GM23248 (cell line): ENCODE measurements at regions of chr20 and their contacts with region 1.

Region 1: DNA sequence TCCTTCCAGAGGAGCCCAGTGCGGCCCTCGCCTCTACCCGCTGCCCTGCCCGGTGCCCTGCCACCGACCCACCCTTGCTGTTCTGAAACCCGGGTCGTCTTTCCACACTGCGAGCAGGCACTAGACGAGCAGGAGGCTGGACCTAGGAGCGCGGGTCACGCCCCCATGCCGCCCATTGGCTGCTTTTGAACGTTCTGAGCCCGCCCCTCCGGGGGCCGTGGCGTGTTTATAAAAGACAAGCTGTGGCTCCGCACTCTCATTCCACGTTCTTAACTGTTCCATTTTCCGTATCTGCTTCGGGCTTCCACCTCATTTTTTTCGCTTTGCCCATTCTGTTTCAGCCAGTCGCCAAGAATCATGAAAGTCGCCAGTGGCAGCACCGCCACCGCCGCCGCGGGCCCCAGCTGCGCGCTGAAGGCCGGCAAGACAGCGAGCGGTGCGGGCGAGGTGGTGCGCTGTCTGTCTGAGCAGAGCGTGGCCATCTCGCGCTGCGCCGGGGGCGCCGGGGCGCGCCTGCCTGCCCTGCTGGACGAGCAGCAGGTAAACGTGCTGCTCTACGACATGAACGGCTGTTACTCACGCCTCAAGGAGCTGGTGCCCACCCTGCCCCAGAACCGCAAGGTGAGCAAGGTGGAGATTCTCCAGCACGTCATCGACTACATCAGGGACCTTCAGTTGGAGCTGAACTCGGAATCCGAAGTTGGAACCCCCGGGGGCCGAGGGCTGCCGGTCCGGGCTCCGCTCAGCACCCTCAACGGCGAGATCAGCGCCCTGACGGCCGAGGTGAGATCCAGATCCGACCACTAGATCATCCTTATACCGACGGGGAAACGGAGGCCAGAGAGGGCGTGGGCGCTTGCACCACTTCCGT is at the start of gene ID1:
- DNase-seq: peak; percentile 98
- H3K4me3 ChIP-seq: peak within 1 kb of the TSS; percentile 98
- H3K27ac ChIP-seq: peak within 1 kb of the TSS; percentile 100
- H3K4me1 ChIP-seq: peaks cover 35% of the 10 kb centered on the region
- H3K27me3 ChIP-seq: no peaks in the 10 kb centered on the region
- total RNA-seq, gene ID1: 583 and 780 TPM in 2 replicates

Region 2: DNA sequence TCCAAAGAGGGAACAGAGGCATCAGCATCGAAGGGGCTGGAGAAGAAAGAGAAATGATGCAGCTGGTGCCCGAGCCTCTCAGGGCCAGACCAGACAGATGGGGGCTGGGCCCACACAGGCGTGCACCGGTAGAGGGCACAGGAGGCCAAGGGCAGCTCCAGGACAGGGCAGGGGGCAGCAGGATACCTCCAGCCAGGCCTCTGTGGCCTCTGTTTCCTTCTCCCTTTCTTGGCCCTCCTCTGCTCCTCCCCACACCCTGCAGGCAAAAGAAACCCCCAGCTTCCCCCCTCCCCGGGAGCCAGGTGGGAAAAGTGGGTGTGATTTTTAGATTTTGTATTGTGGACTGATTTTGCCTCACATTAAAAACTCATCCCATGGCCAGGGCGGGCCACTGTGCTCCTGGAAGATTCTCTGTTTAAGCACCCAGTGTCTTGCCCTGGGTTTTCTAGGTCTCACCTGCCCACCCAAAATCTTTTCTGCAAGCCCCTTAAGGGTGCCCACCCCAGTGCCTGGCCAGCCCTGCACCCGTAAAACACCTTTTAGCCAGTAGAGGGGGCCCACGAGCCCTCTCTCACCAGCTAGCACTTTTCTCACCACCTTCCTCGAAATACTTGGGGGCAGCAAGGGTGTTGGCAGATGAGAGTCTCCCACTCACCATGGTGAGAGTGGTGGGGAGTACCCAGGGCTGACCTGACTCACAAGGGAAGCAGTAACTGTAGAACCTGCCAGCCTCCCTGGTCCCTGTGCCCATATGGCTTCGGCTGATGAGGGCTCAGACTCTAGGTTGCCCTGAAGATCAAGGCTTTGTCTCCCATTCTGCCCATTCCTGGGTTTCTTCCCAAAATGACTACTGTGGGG is 35.9 kb before region 1 on chr20:
- in situ Hi-C with region 1: loop called (anchors 5 kb)
- DNase-seq: peak; percentile 80
- H3K4me3 ChIP-seq: no peak overlapping the region
- H3K27ac ChIP-seq: peak overlapping the region; percentile 99
- H3K4me1 ChIP-seq: peaks cover 56% of the 10 kb centered on the region
- H3K27me3 ChIP-seq: no peaks in the 10 kb centered on the region

Region 3: GRCh38 chr20:31738729-31739561 is 133.7 kb after region 1 on chr20 and contains the start of gene TPX2:
- in situ Hi-C with region 1: no loop called
- DNase-seq: peak; percentile 99
- H3K4me3 ChIP-seq: peak within 1 kb of the TSS; percentile 86
- H3K27ac ChIP-seq: peak within 1 kb of the TSS; percentile 66
- H3K4me1 ChIP-seq: peaks cover 11% of the 10 kb centered on the region; the same call in 1 of the 2 replicates
- H3K27me3 ChIP-seq: no peaks in the 10 kb centered on the region
- total RNA-seq, gene TPX2: 35.5 and 39.6 TPM in 2 replicates